ENCODE measurements at regions of chr9 and their contacts with region 1.

Region 1: GRCh38 chr9:134443168-134444037 is 117.1 kb downstream of the RXRA start:
- DNase-seq: peak; percentile 78 to 86
- ATAC-seq: peak; percentile 79 to 94 (median 86)
- H3K4me3 ChIP-seq: peak overlapping the region in 1 of 10 donors; percentile 5
- H3K27ac ChIP-seq: peak overlapping the region in 3 of 10 donors; percentile 12 to 76 (median 43)
- H3K4me1 ChIP-seq: peaks cover 25 to 50% (median 40%) of the 10 kb centered on the region in 9 donors
- H3K27me3 ChIP-seq: peaks cover 0 to 9% (median 0%) of the 10 kb centered on the region in 7 donors
- CTCF ChIP-seq: peak; percentile 97 to 100 (median 99)

Region 2: GRCh38 chr9:134171316-134172197 is 271.8 kb before region 1 on chr9:
- intact Hi-C with region 1: loop called (anchors 1 to 2 kb)
- DNase-seq: no peak
- ATAC-seq: peak in 4 of 8 donors; percentile 2 to 28 (median 10)
- H3K4me3 ChIP-seq: no peak overlapping the region
- H3K27ac ChIP-seq: peak overlapping the region in 6 of 10 donors; percentile 31 to 62 (median 48)
- H3K4me1 ChIP-seq: peaks cover 0 to 42% (median 18%) of the 10 kb centered on the region in 9 donors
- H3K27me3 ChIP-seq: peaks cover 0 to 23% (median 20%) of the 10 kb centered on the region in 7 donors
- CTCF ChIP-seq: no peak

Region 3: DNA sequence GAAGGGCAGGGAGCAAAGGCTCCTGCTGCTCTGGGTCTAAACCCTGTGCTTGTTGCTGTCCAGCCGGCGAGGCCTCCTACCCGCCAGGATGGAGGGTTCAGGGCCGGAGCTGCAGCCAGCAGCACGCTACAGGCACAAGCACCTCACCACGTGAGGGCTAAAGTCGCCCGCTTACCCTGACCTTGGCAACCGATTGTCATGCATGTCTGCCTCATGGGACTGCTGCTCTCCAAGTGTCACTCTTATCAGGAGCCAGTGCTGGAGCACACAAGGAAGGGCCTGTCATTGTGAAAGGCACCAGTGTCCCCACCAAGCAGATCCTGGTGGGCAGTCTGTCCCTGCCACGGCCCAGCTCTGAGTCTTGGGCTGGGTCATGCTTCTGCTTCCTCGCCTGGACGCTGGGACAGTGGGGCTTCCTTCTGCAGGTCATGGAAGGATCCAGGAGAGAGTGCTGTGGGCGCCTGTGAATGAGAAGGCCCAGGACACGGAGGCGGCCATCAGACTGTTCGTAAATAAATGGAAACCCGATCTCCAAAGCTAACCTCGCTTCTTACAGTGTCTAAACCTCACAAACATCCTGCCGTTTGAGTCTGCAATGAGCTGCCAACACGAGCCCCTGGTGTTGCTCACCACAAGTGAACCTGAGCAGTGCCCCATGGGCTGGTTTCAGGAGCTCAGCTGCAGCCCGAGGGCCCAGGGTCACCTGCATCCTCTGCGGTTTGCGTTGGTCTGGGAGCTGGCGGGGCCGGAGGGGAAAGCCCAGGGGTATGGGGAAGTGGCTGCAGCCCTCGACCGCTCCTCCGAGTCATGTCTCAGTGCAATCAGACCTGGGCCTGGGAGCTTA is 175.3 kb before region 1 on chr9:
- intact Hi-C with region 1: loop called in 2 of 10 experiments (anchors 2 to 5 kb)
- DNase-seq: peak; percentile 40 to 41
- ATAC-seq: peak; percentile 63 to 89 (median 78)
- H3K4me3 ChIP-seq: no peak overlapping the region
- H3K27ac ChIP-seq: peak overlapping the region in 9 of 10 donors; percentile 22 to 79 (median 58)
- H3K4me1 ChIP-seq: peaks cover 0 to 18% (median 13%) of the 10 kb centered on the region in 9 donors
- H3K27me3 ChIP-seq: peaks cover 0 to 34% (median 6%) of the 10 kb centered on the region in 7 donors
- CTCF ChIP-seq: no peak

Measured in heart right ventricle (tissue), 16 donors.